Cardiac septum (tissue), 1 donor: ENCODE measurements at regions of chr14 and their contacts with region 1.

Region 1: GRCh38 chr14:32076278-32077080 is 625 bp upstream of the ARHGAP5 start:
- DNase-seq: peak; percentile 96

Region 2: DNA sequence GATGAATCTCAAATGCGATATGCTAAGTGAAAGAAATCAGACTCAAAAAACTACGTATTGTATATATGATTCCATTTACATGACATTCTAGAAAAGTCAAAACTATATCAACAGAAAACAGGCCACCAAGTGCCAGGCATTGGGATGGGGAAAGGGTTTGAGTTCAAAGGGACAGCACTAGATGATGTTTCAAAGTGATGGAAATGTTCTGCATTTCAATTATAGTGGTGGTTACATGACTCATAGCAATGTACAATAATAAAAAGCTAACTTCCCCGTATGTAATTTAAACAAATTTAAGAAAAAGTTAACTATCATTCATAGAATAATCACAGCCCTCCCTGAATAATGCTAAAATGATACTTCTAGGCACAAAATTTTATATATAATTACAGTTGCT is 882.4 kb before region 1 on chr14:
- intact Hi-C with region 1: no loop called
- DNase-seq: no peak

Region 3: DNA sequence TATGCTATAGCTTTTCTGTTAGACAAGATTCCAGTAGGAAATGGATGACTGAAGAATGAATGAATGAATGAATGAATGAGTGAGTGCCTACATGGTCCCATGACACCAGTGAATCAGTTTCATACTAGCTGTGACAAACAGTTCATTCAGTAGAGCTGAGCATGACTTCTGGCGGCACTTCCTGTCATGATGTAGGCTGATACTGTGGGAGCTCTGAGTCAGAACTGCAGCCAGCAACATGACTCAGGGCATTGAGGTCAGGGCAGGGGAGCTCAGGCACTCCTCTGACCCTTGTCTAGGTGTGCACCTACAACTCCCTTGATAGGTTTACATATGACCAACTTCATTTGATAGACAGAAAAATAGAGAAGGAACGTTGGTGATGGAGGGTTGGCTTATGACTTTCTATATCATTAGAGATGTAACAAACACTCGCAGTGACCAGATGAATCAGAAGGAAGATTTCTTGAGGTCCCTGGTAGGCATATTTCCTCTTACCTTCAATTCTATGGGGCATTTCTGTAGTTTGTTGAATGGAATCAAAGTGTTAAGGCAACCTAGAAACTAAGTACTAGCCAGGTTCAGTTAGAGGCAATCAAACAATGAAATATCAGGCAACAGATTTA is 138.6 kb before region 1 on chr14:
- intact Hi-C with region 1: loop called (anchors 5 kb)
- DNase-seq: no peak

Region 4: GRCh38 chr14:31992011-31992447 is 84.5 kb before region 1 on chr14:
- intact Hi-C with region 1: loop called (anchors 5 kb)
- DNase-seq: no peak

Region 5: DNA sequence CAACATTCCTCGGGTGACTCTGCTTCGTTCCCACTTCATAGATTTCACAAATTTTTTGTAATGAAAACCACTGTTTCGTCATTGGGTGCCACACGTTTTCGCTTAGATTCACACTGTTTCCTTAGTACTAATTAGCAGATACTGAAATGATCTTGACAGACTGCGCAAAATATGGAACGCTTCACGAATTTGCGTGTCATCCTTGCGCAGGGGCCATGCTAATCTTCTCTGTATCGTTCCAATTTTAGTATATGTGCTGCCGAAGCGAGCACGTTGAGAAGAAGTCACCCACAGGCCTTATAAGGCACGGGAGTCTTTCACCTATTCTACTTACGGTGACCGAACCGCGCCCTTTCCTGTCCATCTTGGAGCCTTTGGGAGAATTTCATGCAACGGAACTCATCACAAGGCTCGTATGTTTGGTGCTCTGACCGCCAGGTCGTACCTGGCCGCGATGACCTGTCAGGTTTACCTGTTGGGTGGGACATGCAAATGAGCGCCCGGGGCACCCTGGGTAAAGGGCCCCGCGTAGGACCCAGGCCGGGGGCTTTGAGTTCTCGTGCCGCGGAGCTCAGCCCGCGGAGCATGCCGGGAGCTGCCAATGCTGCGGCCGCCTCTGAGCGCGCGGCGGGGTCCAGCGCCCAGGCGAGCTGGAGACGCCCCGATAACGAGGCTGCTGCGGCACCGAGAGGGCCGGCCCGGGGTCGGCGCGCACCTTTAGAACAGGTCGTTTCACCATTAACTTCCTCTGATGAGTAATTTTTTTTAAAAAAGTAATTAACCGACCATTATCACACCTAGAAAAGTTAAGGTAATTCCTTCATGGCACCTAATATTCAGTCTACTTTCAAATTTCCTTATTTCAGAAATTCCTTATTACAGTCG is 126.8 kb after region 1 on chr14 and contains the start of gene RNU6-8:
- intact Hi-C with region 1: loop called (anchors 1 kb)
- DNase-seq: peak; percentile 92
- total RNA-seq, gene RNU6-8: not detected